Cardiac septum (tissue), 1 donor: ENCODE measurements at regions of chr1 and their contacts with region 1.

Region 1: DNA sequence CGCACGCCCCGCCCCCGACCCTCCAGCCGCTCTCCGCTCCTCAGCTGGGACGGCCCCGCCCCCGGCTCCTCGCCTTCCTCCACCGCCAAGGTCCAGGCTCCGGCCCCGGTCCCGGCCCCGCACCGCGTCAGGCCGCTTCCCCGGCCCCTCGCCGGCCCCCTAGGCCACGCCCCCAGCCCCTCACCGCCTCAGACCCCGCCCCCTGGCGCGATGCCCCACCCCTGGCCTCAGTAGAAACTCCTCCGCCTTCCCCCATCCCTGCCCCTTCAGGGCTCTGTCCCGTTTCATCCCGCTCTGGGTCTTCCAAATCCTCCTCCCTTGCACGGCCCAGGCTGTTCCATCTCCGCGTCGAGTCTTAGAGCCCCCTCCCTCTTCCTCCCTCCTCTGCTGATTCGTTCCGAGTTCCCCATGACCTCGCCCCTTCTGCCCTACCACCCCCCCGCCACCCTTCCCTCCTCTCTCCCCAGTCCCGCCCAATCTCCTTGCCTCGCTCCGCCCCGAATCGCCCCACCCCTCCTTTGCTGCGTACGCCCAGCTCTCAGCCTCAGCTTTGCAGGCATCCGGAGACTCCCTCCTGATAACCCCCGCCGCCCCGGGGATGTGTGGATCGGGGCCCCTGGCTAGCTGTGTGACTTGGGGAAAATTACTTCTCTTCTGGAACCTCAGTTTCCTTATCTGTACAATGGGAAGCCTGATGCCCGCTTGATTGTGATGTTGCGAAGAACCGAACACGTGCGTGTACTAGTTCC is 448 bp upstream of the ASAP3 start:
- DNase-seq: peak; percentile 95

Region 2: DNA sequence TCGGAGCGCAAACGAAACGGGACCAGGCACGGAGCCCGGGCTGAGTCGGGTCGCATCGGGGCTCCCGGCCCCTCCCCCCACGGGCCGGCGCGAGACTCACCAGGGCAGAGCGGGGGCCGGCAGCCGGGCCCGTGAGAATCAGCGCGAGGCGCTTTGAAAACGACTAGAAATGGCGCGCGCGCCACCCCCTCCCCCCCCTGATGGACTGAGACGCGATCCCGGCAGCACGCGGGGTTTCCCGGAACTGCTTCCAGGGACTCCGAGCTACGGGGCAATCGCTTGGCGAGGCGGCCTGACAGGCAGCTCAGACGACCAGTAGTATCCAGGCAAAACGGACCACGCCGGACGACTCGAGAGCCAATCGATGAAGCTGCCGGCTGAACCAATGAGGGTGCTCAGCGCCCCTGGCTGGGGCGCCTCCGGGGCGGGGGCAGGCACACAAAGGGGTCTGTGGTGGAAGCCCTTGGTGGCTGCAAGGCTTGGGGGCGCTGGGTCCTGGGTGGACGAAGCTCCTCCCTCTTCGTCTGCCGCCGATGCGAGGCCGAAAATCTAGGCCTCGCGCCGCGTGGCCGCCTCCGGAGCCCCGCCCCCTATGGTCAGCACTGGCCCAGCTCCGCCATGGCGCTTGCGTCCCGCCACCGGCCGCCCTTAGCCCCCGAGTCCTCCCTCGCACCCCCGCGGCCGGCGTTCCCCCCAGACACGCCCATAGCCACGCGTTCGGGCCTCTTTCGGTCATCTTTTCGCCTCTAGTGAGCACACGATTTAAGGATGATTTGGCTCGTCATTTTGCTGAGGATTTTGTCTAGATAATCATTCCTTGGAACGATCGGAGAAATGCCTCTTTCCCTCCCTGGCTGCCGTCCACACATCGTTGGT is 140.1 kb before region 1 on chr1 and contains the start of gene HNRNPR:
- intact Hi-C with region 1: loop called (anchors 5 kb)
- DNase-seq: peak; percentile 100
- total RNA-seq, gene HNRNPR: 67.3 TPM

Region 3: GRCh38 chr1:23422241-23423030 is 62.0 kb before region 1 on chr1:
- intact Hi-C with region 1: loop called (anchors 5 kb)
- DNase-seq: peak; percentile 90

Region 4: GRCh38 chr1:23507507-23507906 is 23.1 kb after region 1 on chr1:
- intact Hi-C with region 1: no loop called
- DNase-seq: no peak